PC-9 (cell line): ENCODE measurements at regions of chr3 and their contacts with region 1.

Region 1: GRCh38 chr3:72307438-72308115 is 522.6 kb upstream of the PROK2 start:
- DNase-seq: no peak
- H3K4me3 ChIP-seq: no peak overlapping the region
- H3K27ac ChIP-seq: no peak overlapping the region
- H3K4me1 ChIP-seq: no peaks in the 10 kb centered on the region
- H3K27me3 ChIP-seq: no peaks in the 10 kb centered on the region
- CTCF ChIP-seq: no peak

Region 2: DNA sequence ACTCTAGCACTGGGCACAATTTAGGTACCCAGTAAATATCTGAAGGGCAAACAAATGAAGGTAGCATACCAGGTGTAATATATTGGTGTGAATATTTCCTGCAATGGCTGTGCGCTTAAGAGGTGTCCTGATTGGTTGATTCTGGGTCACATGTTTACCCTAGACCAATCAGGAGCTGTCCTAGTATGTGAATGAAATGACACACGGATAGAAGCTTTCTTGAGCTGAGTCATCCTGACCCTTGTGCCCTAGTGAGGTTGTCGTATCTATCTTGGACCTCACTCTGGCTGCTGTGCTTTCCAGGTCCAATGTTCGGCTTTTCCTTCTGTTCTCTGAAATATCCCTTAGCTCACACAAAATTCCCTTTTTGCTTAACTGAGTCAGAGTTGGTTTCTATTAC is 665.9 kb before region 1 on chr3:
- CTCF ChIA-PET with region 1: no interaction called
- POLR2A ChIA-PET with region 1: no interaction called
- intact Hi-C with region 1: no loop called
- DNase-seq: no peak
- H3K4me3 ChIP-seq: no peak overlapping the region
- H3K27ac ChIP-seq: no peak overlapping the region
- H3K4me1 ChIP-seq: no peaks in the 10 kb centered on the region
- H3K27me3 ChIP-seq: peaks cover 16% of the 10 kb centered on the region; the same call in 1 of the 2 replicates
- CTCF ChIP-seq: no peak

Region 3: GRCh38 chr3:72048501-72049272 is 258.9 kb before region 1 on chr3:
- CTCF ChIA-PET with region 1: interaction called, 13 read pairs
- POLR2A ChIA-PET with region 1: no interaction called
- intact Hi-C with region 1: no loop called
- DNase-seq: no peak
- H3K4me3 ChIP-seq: no peak overlapping the region
- H3K27ac ChIP-seq: no peak overlapping the region
- H3K4me1 ChIP-seq: no peaks in the 10 kb centered on the region
- H3K27me3 ChIP-seq: no peaks in the 10 kb centered on the region
- CTCF ChIP-seq: no peak